Cardiac septum (tissue), 1 donor: ENCODE measurements at regions of chr11 and their contacts with region 1.

Region 1: DNA sequence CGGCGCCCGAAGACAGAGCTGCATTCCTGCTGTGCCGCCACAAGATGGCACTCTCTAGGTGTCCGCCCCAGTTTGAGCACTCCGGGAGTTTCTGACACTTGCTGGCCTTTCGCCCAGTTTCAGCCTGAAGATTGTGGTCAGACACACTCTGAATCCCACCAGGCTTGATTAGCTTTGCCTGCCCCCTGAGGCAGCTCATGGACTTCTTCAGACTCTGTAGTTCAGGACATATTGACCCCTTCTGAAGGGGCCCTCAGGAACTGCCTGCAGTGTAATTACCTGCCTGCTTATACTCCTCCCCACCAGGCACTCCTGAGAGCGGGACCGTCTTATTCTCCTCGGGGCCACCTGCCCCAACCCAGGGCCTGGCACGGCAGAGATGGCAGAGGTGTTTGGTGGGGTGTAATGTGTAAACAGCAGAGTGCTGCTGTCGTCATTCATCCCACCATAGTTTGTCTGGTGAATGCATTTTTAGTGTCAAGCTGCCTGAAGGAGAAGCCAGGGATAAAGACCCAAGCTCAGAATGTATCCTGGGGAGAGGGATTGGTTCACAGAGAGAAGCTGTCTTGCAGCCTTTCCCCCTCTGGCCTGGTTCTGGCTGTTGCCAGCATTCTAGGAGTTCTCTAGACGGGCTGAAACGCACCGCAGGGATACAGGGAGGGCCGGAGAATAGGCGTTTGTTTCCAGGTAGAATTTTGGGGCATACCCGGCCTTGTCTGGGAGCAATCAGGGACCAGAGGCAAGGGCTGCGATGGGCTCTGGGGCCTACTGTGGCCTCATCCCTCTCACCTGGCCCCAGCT is 46.4 kb downstream of the EIF3F start:
- DNase-seq: peak; percentile 84

Region 2: DNA sequence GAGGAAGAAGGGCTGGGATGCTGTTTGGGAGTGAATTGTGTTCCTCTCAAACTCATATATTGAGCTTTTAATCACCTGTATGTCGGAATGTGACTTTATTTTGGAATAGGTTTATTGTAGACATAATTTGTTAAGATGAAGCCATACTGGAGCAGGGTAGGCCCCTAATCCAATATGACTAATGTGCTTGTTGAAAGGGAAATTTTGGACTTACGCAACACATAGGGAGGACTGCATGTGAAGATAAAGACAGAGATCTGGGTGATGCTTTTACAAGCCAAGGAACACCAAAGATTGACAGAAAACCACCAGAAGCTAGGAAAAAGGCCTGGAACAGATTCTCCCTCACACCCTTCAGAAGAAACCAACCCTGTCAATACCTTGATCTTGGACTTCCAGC is 284.0 kb before region 1 on chr11:
- intact Hi-C with region 1: no loop called
- DNase-seq: no peak

Region 3: DNA sequence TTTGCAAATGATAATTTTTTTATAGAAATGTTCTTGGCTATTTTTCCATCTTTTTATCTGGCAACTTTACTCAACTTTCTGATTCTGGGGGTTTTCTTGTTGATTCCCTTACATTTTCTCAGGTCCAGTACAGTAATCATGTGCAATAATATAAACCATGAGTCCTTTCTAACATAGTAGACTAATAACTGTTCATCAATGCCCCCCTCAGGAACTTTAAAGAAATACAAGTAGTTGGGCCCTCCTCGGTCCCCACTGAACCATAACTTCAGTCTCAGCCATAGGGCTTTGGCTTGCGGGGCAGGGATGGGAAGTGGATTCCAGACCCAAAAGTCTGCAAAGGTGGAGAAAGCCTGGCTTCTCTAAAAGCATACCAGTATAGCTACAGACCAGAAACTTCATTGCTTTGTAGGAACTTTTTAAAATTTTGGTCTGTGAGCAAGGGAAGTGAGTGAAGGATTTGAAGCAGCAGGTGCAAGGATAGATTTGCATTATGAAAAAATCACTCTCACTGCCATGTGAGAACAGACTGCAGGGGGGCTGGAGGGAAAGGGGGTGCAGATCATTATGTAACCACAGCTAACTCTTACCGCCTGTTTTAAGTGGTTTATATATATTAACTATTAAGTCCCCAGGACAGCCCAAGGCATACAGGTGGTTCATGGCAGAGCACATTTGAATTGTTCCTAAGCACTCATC is 37.1 kb after region 1 on chr11:
- intact Hi-C with region 1: loop called (anchors 1 kb)
- DNase-seq: no peak